AG04449 (cell line): ENCODE measurements at regions of chr4 and their contacts with region 1.

Region 1: DNA sequence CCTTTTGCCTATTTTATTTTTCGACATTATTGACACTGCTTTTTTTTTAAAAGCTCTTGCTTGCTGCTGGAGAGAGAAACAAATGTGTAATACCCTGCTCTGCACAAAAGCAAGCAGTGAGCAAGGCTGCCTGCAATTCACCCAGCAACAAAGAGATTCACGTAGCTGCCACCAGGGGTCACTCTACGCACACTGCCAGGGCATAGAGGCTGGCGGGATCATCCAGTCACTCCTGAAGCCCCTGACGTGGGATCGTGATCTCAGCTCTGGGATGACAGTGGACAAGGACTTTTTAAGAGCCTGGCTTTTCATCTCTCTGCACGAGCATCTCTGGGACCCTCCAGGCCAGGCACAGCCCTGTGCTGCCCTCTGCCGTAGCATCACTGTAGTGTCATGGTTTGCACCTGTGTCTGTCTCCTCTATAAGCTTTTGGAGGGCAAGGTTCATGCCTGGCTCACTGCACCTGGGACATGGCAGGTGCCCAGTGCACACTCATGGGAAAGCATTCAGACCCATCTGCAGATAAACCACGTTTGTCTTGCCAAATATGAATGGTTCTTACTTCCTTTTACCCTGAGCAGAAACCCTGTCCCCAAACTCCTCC is 19.8 kb downstream of the C4orf50 start:
- DNase-seq: peak; percentile 5
- H3K4me3 ChIP-seq: no peak overlapping the region
- CTCF ChIP-seq: peak; percentile 89

Region 2: DNA sequence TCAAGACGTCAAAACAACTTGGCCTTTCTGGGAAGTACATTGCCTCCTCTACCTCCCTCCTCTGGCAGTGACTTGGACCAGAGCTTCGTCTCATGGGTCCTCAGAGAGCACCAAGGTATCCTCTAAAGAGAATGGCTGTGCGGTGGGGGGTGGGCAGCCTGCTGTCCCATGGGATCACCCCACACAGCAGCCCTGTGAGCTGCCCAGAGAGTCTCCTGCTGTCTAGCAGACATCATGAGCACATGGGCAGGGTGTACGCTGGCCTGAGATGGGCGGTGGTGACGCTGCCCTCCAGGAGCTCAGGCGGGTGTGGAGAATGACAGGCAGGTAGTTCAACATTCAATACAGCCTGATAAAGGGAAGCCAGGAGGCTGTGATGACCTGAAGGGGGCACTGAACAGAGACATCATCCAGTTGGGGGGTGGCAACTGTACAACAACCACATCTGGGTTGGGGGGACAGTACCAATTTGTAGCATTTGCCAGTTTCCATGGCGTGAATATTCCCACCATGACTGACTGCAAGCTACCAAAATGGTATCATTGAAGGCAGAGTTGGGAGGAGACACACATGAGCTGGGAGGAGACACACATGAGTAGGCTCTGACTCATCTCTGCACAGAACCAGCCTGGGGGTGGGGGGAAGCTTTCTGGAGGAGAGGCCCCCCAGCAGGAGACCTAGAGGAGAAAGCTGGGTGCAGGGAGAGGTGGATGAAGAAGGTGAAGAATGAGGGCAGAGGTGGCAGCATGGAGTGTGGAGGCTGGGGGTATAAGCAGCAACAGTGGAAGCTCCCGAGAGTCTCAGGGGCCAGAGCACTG is 16.1 kb before region 1 on chr4:
- CTCF ChIA-PET with region 1: interaction called, 17 read pairs
- POLR2A ChIA-PET with region 1: no interaction called
- DNase-seq: no peak
- H3K4me3 ChIP-seq: no peak overlapping the region
- CTCF ChIP-seq: no peak

Region 3: GRCh38 chr4:6019316-6020263 is 21.2 kb after region 1 on chr4:
- CTCF ChIA-PET with region 1: interaction called, 13 read pairs
- POLR2A ChIA-PET with region 1: no interaction called
- DNase-seq: no peak
- H3K4me3 ChIP-seq: no peak overlapping the region
- CTCF ChIP-seq: peak; percentile 72

Region 4: GRCh38 chr4:6087673-6088341 is 89.4 kb after region 1 on chr4:
- CTCF ChIA-PET with region 1: interaction called, 37 read pairs
- POLR2A ChIA-PET with region 1: no interaction called
- DNase-seq: no peak
- H3K4me3 ChIP-seq: no peak overlapping the region
- CTCF ChIP-seq: peak; percentile 57